Activated T-helper 1 cell treated with anti-CD3 and anti-CD28 coated beads, Interleukin-12 subunit alpha, Interleukin-12 subunit beta, Interleukin-2, Interleukin-4 antibody, amounts not matched to agents 30 ng/mL and 10 ng/mL and 1 ng/mL, durations not matched to agents 14 hours and 24 hours and 36 hours (primary cell): ENCODE measurements at regions of chr9 and their contacts with region 1.

Region 1: DNA sequence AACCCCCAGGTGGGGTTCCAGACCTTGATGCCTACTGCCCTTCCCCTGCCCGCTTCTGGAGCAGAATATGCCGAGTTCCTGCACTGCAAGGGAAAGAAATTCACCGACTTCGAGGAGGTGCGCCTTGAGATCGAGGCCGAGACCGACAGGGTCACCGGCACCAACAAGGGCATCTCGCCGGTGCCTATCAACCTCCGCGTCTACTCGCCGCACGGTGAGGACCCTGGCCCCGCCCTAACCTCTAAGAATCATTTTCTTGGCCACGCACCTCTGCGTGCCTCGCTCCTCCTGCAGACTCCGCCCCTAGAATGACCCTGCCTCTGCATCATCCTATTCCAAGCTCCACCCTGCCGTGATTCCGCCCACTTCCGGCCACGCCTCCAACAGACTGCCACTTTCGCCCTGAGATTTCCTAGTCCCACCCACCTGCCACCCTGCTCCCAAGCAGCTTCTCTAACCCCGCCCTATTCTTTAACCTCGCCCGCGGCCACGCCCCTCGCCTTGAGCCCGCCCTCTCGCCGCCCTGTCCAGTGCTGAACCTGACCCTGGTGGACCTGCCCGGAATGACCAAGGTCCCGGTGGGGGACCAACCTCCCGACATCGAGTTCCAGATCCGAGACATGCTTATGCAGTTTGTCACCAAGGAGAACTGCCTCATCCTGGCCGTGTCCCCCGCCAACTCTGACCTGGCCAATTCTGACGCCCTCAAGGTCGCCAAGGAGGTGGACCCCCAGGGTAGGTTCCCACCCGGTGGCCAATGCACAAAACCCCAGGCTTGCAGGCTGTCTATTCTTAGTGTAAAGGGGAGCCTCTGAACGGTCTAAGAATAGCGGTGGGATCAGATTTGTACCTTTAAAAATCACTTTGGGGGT is 15.6 kb downstream of the DNM1 start:
- DNase-seq: peak; percentile 92
- H3K4me3 Mint-ChIP-seq: peak overlapping the region; percentile 75
- H3K27ac Mint-ChIP-seq: peak overlapping the region; percentile 4
- H3K4me1 Mint-ChIP-seq: peaks cover 7% of the 10 kb centered on the region
- H3K27me3 Mint-ChIP-seq: peaks cover 1% of the 10 kb centered on the region

Region 2: DNA sequence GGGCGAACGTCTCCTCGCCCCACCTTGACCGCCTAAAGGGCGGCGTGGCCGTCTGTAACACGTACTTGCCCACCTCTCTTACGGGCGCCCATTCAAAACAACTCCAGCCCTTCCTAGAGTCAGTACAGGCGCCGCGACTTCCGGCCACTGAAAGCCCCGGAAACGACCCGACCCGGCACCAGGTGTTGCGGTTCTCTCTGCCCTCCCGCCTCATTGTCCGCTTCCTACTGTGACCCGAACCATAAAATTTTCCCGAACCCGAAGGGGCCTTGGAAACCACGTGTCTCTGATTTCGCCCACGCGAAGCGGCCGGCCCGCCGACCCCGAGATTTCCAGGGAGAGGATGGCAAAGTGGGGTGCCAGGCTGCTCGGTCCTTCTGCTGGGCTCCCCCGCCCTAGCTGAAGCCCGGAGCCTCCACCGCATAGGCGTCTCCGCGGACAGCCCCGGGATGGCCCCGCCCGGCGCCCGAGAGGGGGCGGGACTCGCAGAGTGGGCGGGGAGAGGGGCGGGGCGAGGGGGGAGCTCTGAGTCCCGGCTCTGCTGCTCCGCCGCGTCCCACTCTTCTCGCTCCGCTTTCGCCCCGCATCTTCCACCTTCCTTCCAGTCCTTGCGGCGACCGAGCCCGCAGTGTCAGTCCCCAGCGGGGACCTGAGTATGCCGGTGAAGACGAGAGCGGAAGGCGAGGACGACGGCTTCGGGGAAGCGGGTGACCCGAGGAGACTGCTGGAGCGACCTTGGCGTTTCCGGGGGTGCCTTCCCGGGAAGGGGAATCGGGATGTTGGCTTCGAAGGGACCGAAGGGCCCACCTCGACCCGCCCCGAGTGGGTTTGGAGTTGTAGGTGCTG is 90.5 kb before region 1 on chr9:
- intact Hi-C with region 1: loop called (anchors 1 kb)
- DNase-seq: peak; percentile 79
- H3K4me3 Mint-ChIP-seq: peak overlapping the region; percentile 90
- H3K27ac Mint-ChIP-seq: peak overlapping the region; percentile 99
- H3K4me1 Mint-ChIP-seq: peaks cover 39% of the 10 kb centered on the region
- H3K27me3 Mint-ChIP-seq: peaks cover 19% of the 10 kb centered on the region

Region 3: GRCh38 chr9:128191406-128192046 is 27.2 kb before region 1 on chr9 and contains the start of gene CIZ1:
- intact Hi-C with region 1: loop called (anchors 1 kb)
- DNase-seq: peak; percentile 69
- H3K4me3 Mint-ChIP-seq: peak within 1 kb of the TSS; percentile 98
- H3K27ac Mint-ChIP-seq: peak within 1 kb of the TSS; percentile 96
- H3K4me1 Mint-ChIP-seq: peaks cover 23% of the 10 kb centered on the region
- H3K27me3 Mint-ChIP-seq: no peaks in the 10 kb centered on the region
- total RNA-seq, gene CIZ1: 154 and 158 TPM in 2 replicates

Region 4: DNA sequence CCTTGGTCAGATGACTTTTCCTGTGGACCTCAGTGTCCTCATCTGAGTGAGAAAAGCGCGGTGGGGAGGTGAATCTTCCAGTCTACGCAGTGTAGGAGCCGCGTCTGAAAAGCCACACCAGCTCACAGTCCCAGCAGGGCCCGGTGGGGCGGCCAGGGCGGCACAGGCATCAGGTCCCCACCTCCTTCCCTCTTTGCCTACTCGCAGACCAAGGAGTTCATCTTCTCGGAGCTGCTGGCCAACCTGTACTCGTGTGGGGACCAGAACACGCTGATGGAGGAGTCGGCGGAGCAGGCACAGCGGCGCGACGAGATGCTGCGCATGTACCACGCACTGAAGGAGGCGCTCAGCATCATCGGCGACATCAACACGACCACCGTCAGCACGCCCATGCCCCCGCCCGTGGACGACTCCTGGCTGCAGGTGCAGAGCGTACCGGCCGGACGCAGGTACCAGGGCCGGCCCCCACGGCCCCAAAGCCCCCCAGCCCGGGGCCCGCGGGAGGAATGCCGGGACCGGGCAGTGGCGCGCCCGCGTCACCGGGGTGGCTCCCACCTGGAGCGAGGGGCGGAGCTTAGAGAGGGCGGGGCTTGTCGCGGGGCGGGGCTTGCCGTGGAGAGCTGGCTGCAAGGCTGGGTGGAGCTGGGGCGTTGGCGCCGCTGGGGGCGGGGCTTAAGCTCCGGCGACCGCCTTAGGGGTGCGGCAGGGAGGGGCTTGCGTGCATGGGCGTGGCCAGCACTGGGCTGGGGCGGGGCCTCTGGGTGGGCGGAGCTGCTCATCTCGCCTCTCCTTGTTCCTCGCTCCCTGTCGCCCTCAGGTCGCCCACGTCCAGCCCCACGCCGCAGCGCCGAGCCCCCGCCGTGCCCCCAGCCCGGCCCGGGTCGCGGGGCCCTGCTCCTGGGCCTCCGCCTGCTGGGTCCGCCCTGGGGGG is 31.4 kb after region 1 on chr9:
- intact Hi-C with region 1: loop called (anchors 1 kb)
- DNase-seq: peak; percentile 94
- H3K4me3 Mint-ChIP-seq: peak overlapping the region; percentile 78
- H3K27ac Mint-ChIP-seq: no peak overlapping the region
- H3K4me1 Mint-ChIP-seq: peaks cover 5% of the 10 kb centered on the region
- H3K27me3 Mint-ChIP-seq: peaks cover 28% of the 10 kb centered on the region

Region 5: GRCh38 chr9:128339771-128340690 is 121.3 kb after region 1 on chr9 and contains the start of gene SLC27A4:
- intact Hi-C with region 1: loop called (anchors 1 kb)
- DNase-seq: peak; percentile 82
- H3K4me3 Mint-ChIP-seq: peak within 1 kb of the TSS; percentile 94
- H3K27ac Mint-ChIP-seq: peak within 1 kb of the TSS; percentile 88
- H3K4me1 Mint-ChIP-seq: peaks cover 6% of the 10 kb centered on the region
- H3K27me3 Mint-ChIP-seq: no peaks in the 10 kb centered on the region
- total RNA-seq, gene SLC27A4: 41.8 and 43.2 TPM in 2 replicates